Activated CD4-positive, alpha-beta T cell treated with anti-CD3 and anti-CD28 coated beads, Interleukin-2, amount 10 ng/mL, durations not matched to agents 24 days and 14 days (primary cell): ENCODE measurements at regions of chr2 and their contacts with region 1.

Region 1: GRCh38 chr2:60818272-60818671 is 62.2 kb downstream of the PAPOLG start:
- DNase-seq: no peak
- H3K4me3 Mint-ChIP-seq: peak overlapping the region; percentile 61
- H3K27ac Mint-ChIP-seq: peak overlapping the region; percentile 91
- H3K4me1 Mint-ChIP-seq: peaks cover 51% of the 10 kb centered on the region
- H3K27me3 Mint-ChIP-seq: no peaks in the 10 kb centered on the region

Region 2: DNA sequence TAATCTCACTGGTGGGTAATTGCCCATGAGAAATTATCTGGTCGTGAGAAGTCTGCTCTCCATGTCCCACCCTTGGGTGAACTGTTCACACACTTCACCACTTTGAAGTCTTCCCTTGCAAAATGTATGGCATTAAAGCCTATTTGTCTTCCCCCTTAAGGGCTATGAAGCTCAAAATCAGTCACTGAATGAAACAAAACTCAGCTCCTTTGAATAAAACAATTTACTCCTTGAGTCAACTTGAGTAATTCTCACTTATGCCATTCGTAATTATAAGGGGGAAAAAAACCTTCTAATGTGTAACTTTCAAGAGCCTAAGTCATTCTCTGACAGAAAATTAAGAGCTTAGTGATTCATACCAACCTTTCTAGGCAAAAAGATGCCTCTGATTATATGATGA is 14.3 kb after region 1 on chr2:
- intact Hi-C with region 1: loop called (anchors 2 kb)
- DNase-seq: no peak
- H3K4me3 Mint-ChIP-seq: no peak overlapping the region
- H3K27ac Mint-ChIP-seq: peak overlapping the region; percentile 69
- H3K4me1 Mint-ChIP-seq: peaks cover 18% of the 10 kb centered on the region
- H3K27me3 Mint-ChIP-seq: no peaks in the 10 kb centered on the region

Region 3: GRCh38 chr2:60872510-60872928 is 54.2 kb after region 1 on chr2:
- intact Hi-C with region 1: loop called (anchors 1 kb)
- DNase-seq: no peak
- H3K4me3 Mint-ChIP-seq: no peak overlapping the region
- H3K27ac Mint-ChIP-seq: peak overlapping the region; percentile 51
- H3K4me1 Mint-ChIP-seq: peaks cover 22% of the 10 kb centered on the region
- H3K27me3 Mint-ChIP-seq: no peaks in the 10 kb centered on the region

Region 4: DNA sequence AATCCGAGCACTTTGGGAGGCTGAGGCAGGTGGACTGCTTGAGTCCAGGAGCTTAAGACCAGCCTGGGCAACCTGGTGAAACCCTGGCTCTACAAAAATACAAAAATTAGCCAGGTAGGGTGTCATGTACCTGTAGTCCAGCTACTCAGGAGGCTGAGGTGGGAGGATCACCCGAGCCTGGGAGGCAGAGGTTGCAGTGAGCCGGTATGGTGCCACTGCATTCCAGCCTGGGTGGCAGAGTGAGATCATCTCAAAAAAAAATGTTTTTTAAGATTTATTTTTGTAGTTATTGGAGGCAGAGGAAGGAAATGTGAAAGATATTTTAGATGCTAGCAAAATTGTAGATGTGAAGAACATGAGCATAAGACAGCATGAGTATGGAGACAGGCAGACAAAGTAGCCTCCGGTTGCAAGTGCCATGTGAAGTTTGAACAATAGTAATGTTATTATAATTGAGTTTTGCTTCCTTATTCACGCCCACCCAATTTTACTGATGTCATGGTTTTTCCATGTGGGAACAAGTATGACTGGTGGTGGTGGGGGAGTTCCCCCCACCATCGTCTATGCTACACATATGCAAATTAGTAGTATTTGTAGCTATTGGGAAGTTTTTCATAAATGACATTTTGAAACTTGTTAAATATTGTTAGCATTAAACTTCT is 81.1 kb after region 1 on chr2:
- intact Hi-C with region 1: loop called (anchors 1 kb)
- DNase-seq: no peak
- H3K4me3 Mint-ChIP-seq: peak overlapping the region; percentile 58
- H3K27ac Mint-ChIP-seq: peak overlapping the region; percentile 90
- H3K4me1 Mint-ChIP-seq: peaks cover 37% of the 10 kb centered on the region
- H3K27me3 Mint-ChIP-seq: no peaks in the 10 kb centered on the region